ENCODE measurements at regions of chr13 and their contacts with region 1.

Region 1: DNA sequence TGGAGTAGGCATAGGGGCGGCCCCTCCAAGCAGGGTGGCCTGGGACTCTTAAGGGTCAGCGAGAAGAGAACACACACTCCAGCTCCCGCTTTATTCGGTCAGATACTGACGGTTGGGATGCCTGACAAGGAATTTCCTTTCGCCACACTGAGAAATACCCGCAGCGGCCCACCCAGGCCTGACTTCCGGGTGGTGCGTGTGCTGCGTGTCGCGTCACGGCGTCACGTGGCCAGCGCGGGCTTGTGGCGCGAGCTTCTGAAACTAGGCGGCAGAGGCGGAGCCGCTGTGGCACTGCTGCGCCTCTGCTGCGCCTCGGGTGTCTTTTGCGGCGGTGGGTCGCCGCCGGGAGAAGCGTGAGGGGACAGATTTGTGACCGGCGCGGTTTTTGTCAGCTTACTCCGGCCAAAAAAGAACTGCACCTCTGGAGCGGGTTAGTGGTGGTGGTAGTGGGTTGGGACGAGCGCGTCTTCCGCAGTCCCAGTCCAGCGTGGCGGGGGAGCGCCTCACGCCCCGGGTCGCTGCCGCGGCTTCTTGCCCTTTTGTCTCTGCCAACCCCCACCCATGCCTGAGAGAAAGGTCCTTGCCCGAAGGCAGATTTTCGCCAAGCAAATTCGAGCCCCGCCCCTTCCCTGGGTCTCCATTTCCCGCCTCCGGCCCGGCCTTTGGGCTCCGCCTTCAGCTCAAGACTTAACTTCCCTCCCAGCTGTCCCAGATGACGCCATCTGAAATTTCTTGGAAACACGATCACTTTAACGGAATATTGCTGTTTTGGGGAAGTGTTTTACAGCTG is at the starts of genes BRCA2 and ZAR1L:
- DNase-seq: peak; percentile 94 to 97
- H3K4me3 ChIP-seq: peak within 1 kb of the TSS; percentile 67
- H3K4me1 ChIP-seq: peaks cover 22% of the 10 kb centered on the region
- H3K27me3 ChIP-seq: no peaks in the 10 kb centered on the region

Region 2: DNA sequence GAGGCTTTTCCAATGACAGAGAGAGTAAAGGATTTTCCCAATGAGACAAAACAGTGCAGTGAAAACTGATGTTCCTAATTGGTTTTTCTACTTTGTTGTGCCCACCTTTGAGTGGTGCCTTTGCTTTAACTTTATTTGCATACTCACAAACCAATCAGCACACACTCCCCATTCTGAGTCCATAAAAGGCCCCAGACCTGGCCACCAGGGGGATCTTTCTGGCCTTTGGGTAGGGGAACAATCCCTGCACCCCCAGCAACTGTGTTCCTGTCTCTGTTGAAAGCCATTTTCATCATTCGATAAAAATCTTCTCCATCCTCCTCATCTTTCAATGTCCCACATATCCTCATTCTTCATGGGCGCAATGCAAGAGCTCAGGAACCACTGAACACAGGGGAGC is 862.9 kb before region 1 on chr13:
- in situ Hi-C with region 1: no loop called
- DNase-seq: no peak
- H3K4me3 ChIP-seq: no peak overlapping the region
- H3K4me1 ChIP-seq: no peaks in the 10 kb centered on the region
- H3K27me3 ChIP-seq: no peaks in the 10 kb centered on the region

Region 3: GRCh38 chr13:31909864-31910551 is 405.4 kb before region 1 on chr13:
- in situ Hi-C with region 1: loop called (anchors 10 kb)
- DNase-seq: peak; percentile 57 to 75
- H3K4me3 ChIP-seq: no peak overlapping the region
- H3K4me1 ChIP-seq: no peaks in the 10 kb centered on the region; the same call in 1 of the 2 replicates
- H3K27me3 ChIP-seq: no peaks in the 10 kb centered on the region

Region 4: DNA sequence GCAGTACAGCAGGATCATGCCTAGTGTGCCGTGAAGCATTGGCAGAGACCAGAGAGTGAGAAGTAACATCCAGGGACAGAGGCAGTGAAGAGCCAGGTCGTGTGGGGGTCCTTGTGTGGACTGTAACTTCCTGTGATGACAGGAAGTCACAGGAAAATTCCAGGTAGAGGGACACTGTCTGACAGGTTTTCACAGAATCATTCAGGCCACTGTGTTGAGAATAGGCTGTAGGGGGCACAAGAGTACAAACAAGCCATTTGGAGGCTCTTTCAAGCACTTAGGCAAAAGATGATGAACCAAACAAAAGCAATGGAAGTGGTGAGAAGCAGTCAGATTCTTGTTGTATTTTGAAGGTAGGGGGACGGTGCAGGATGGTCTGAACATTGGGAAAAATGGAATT is 66.1 kb after region 1 on chr13:
- in situ Hi-C with region 1: no loop called
- DNase-seq: peak in 1 of 2 experiments; percentile 12
- H3K4me3 ChIP-seq: no peak overlapping the region
- H3K4me1 ChIP-seq: no peaks in the 10 kb centered on the region
- H3K27me3 ChIP-seq: no peaks in the 10 kb centered on the region

Region 5: DNA sequence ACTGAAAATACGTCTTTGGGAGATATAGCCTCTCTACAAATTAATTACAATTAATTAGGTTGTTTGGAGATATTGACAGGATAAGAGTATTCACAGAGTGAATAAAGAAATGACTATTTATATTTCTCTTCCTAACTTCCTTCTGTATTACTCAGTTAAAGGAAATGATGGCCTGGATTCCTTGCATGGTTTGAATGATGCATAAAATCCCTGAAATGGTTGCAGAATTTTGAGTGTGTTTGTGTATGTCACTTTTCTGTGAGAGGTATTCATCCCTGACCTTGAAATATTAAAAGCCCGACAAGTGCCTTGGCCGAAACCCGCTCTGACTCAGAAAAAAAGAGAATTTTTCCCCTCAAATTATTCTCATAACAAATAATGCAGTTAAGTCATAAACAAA is 360.8 kb after region 1 on chr13:
- in situ Hi-C with region 1: no loop called
- DNase-seq: no peak
- H3K4me3 ChIP-seq: no peak overlapping the region
- H3K4me1 ChIP-seq: no peaks in the 10 kb centered on the region
- H3K27me3 ChIP-seq: no peaks in the 10 kb centered on the region

Region 6: DNA sequence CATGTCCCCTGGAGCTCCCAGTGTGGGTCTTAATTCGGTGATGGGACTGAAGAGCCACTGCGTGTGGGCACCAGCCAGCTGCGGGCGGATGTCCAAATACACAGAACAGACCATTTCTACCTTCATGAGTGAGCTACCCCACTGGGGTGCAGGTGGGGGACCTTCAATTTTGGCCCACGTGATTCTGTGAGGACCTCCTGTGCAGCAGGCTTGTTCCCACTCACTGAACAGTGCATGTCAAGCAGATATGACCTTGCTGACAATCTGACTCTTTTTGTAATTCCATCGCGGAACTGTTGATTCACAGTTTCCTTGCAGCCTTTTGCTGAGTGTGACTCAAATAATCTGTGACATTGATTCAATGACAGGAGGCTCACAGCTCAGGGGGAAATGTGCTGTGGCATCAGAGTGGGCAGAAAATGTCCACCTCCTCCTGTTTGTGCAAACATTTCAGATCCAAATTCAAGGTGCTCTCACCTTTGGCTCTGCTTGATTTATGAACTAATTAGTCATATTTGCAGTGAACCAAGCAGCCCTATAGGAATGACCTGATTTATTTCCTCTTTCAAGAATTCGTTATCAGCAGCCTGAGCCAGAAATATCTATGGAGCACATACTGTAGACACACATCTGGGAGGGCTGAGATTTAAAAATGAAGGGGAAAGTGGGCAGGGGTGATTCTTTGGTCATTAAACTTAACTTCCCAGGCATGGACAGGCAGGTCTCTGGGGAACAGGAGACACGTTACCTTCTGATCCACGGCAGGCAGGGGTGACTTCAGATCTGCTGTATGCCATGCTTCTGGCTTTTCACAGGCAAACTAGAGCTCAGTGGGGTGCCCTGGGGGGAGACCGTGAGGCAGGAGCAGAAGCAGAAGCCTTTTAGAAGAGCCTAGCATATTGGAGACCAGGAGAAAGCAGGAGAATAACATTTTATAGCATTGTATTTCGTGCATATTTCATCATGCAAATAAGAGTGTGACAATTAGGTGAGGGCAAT is 530.8 kb after region 1 on chr13:
- in situ Hi-C with region 1: no loop called
- DNase-seq: no peak
- H3K4me3 ChIP-seq: no peak overlapping the region
- H3K4me1 ChIP-seq: no peaks in the 10 kb centered on the region
- H3K27me3 ChIP-seq: no peaks in the 10 kb centered on the region

Measured in HAP-1 (cell line).